ENCODE measurements at regions of chr4 and their contacts with region 1.

Region 1: DNA sequence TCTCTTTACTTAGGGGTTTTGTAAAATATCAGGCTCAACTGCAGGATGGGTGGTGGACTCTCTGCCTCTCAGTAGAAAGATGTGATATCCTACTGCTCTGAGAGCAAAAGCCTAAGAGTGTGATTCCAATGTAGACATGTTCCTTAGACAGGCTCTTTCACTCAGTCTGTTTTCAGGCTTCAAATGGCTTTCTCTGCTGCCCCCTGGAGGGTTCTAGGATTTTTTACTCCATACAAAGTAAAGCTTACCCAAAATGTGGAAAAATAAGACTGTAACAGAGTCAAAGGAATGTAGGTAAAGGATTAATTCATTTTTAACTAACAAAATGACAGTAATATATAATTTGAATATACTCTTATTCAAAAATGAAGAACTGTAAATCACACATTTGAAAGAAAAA is 32.1 kb downstream of the ZGRF1 start:
- DNase-seq: no peak
- ATAC-seq: no peak
- H3K4me3 Mint-ChIP-seq: no peak overlapping the region
- H3K27ac Mint-ChIP-seq: no peak overlapping the region
- H3K4me1 Mint-ChIP-seq: no peaks in the 10 kb centered on the region
- H3K27me3 Mint-ChIP-seq: no peaks in the 10 kb centered on the region
- CTCF ChIP-seq: peak; percentile 84

Region 2: GRCh38 chr4:111943795-111944203 is 660.8 kb before region 1 on chr4:
- CTCF ChIA-PET with region 1: no interaction called
- POLR2A ChIA-PET with region 1: no interaction called
- intact Hi-C with region 1: loop called (anchors 10 kb)
- DNase-seq: no peak
- ATAC-seq: peak; percentile 57
- H3K4me3 Mint-ChIP-seq: no peak overlapping the region
- H3K27ac Mint-ChIP-seq: no peak overlapping the region
- H3K4me1 Mint-ChIP-seq: no peaks in the 10 kb centered on the region
- H3K27me3 Mint-ChIP-seq: no peaks in the 10 kb centered on the region
- CTCF ChIP-seq: no peak

Region 3: DNA sequence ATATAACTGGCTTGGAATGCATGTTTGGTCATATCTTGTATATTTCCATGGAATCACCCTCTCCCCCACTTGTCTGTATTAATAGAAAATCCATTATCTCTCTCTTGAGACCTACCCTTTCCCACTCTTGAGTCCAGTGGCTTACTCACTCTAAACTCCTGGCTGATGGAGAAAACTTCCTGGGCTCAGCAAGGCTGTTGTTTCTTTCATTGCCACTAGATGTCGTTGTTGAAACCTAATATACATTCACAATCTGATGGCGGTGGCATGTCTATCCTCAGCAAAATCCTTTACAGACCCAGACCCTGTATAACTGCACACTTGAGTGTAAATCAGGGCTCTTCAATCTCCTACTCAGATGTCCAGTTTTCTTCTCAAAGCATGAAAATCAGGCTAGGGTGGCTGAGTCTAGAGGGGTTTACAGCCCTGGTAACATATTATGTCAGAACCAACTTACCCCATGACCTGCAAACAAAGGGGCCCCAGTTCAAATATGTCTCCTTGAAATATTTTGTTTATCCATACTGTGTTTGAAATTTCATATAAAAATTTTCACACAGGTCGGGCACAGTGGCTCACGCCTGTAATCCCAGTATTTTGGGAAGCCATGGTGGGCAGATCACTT is 529.3 kb before region 1 on chr4:
- CTCF ChIA-PET with region 1: no interaction called
- POLR2A ChIA-PET with region 1: no interaction called
- intact Hi-C with region 1: loop called (anchors 1 kb)
- DNase-seq: no peak
- ATAC-seq: peak; percentile 64
- H3K4me3 Mint-ChIP-seq: no peak overlapping the region
- H3K27ac Mint-ChIP-seq: no peak overlapping the region
- H3K4me1 Mint-ChIP-seq: no peaks in the 10 kb centered on the region
- H3K27me3 Mint-ChIP-seq: peaks cover 2% of the 10 kb centered on the region
- CTCF ChIP-seq: no peak

Region 4: GRCh38 chr4:112214390-112215264 is 390.0 kb before region 1 on chr4:
- CTCF ChIA-PET with region 1: interaction called, 5 read pairs
- POLR2A ChIA-PET with region 1: no interaction called
- intact Hi-C with region 1: loop called (anchors 1 kb)
- DNase-seq: no peak
- ATAC-seq: no peak
- H3K4me3 Mint-ChIP-seq: no peak overlapping the region
- H3K27ac Mint-ChIP-seq: no peak overlapping the region
- H3K4me1 Mint-ChIP-seq: no peaks in the 10 kb centered on the region
- H3K27me3 Mint-ChIP-seq: no peaks in the 10 kb centered on the region
- CTCF ChIP-seq: peak; percentile 17

Region 5: DNA sequence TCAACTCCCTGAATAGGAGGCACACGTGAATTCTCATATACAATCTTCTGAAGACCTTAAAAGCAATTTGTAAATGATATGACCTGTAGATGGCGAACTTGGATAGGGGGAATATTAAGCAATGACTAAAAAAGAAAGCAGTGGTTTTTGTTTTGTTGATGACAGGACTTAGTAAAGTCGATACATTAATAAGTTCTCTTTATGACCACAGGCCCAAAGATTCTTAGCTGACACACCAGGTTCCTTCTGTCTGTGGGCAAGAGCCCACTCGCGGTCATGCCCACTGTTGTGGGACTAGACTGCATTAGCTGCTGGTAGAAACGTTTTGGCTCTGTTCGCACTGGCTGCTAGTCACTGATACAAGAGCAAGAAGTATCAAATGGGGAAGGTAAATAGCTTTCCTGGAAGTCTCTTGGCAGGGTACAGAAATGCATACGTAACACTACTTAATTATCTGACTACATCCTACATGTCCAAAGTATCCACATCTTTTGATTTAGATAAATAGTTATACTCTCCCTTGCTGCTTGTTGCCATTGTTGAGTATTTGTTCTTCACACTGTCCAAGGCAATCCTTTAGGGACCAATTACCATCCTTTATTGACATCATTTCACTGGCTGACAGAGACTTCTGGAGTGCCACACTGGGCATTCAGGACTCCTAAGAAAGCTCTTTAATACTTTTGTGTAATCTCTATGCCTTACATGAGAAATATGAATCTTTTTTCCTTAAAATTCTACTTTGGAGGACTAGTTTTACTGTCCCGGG is 276.4 kb before region 1 on chr4:
- CTCF ChIA-PET with region 1: interaction called, 40 read pairs
- POLR2A ChIA-PET with region 1: no interaction called
- intact Hi-C with region 1: loop called (anchors 1 kb)
- DNase-seq: no peak
- ATAC-seq: peak; percentile 47
- H3K4me3 Mint-ChIP-seq: peak overlapping the region; percentile 9
- H3K27ac Mint-ChIP-seq: peak overlapping the region; percentile 8
- H3K4me1 Mint-ChIP-seq: no peaks in the 10 kb centered on the region
- H3K27me3 Mint-ChIP-seq: no peaks in the 10 kb centered on the region
- CTCF ChIP-seq: peak; percentile 19